HEK293T (cell line): ENCODE measurements at regions of chr9 and their contacts with region 1.

Region 1: GRCh38 chr9:33452828-33453271 is 5.5 kb upstream of the AQP3 start:
- DNase-seq: peak; percentile 75

Region 2: GRCh38 chr9:33415501-33416038 is 37.3 kb before region 1 on chr9:
- CTCF ChIA-PET with region 1: interaction called, 13 read pairs
- POLR2A ChIA-PET with region 1: no interaction called
- DNase-seq: peak; percentile 69

Region 3: DNA sequence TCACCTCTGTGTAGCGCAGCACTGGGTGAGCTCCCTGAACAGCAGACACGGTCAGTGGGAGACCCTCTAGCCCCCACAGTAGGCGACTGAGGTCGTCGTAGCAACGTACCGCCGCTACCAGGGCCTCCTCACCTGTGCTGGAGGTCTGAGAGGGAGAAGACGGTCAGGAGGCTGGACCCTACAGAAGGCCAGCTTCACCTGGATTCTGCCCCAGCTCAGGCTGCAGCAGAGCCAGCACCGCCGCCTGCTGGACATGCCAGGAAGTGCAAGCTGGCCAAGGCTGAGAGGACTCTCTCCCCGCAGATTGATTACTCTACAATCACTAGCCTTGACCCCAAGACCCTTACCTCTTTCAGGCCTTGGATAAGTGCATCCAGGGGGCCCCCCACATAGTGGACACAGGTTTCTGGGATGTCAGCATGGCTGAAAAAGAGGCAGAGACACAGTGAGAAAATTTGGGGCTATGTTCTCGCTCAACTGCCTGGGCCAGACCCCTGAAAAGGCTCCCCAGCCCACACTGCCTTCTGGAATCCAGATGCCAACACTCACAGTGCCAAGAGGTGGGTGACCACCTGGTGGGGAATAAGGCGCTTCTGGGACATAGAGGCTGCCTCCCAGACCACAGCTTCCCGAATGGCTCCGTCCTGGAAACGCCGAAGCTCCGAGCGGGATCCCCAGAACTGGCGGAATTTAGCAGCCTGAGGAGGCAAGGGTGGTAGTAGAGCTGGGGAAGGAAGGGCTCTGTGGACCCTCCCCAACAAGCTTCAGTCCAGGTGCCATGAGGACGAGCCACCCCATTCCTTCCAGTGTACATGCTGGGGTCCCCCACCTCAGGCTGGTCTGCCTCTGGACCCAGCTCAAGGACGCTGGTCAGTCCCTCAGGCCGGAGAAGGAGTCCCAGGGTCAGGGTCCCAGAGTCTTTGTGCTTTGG is 14.0 kb after region 1 on chr9:
- CTCF ChIA-PET with region 1: interaction called, 16 read pairs
- POLR2A ChIA-PET with region 1: no interaction called
- DNase-seq: peak; percentile 82

Region 4: GRCh38 chr9:33524306-33524947 is 71.6 kb after region 1 on chr9:
- CTCF ChIA-PET with region 1: no interaction called
- POLR2A ChIA-PET with region 1: no interaction called
- DNase-seq: peak; percentile 12